ENCODE measurements at regions of chr6 and their contacts with region 1.

Region 1: GRCh38 chr6:120083186-120083585 is 733.6 kb upstream of the MAN1A1 start:
- DNase-seq: no peak
- H3K4me3 Mint-ChIP-seq: no peak overlapping the region
- H3K27ac Mint-ChIP-seq: no peak overlapping the region
- H3K4me1 Mint-ChIP-seq: no peaks in the 10 kb centered on the region
- H3K27me3 Mint-ChIP-seq: no peaks in the 10 kb centered on the region

Region 2: DNA sequence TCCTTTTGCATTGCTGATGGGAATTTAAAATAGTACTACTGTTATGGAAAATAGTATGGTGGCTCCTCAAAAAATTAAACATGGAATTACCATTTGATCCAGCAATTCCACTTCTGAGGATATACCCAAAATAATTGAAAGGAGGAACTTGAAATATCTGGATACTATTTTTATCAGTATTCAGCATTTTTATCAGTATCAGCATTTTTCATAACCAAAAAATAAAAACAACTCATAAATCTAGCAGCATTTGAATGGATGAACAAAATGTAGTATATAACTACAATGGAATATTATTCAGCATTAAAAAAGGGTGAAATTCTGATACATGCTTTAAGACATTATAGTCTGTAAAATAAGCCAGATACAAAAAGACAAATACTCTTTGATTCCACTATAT is 29.8 kb after region 1 on chr6:
- CTCF ChIA-PET with region 1: no interaction called
- POLR2A ChIA-PET with region 1: no interaction called
- intact Hi-C with region 1: loop called (anchors 1 kb)
- DNase-seq: no peak
- H3K4me3 Mint-ChIP-seq: no peak overlapping the region
- H3K27ac Mint-ChIP-seq: no peak overlapping the region
- H3K4me1 Mint-ChIP-seq: no peaks in the 10 kb centered on the region
- H3K27me3 Mint-ChIP-seq: no peaks in the 10 kb centered on the region